Cardiac septum (tissue), 1 donor: ENCODE measurements at regions of chr9 and their contacts with region 1.

Region 1: GRCh38 chr9:87792831-87793288 is 66.9 kb downstream of the CTSL start:
- DNase-seq: peak; percentile 85

Region 2: GRCh38 chr9:87749335-87750035 is 43.4 kb before region 1 on chr9:
- intact Hi-C with region 1: loop called (anchors 5 kb)
- DNase-seq: no peak